Activated B cell treated with CpG ODN at 0.5 μM for 24 hours (primary cell): ENCODE measurements at regions of chr1 and their contacts with region 1.

Region 1: DNA sequence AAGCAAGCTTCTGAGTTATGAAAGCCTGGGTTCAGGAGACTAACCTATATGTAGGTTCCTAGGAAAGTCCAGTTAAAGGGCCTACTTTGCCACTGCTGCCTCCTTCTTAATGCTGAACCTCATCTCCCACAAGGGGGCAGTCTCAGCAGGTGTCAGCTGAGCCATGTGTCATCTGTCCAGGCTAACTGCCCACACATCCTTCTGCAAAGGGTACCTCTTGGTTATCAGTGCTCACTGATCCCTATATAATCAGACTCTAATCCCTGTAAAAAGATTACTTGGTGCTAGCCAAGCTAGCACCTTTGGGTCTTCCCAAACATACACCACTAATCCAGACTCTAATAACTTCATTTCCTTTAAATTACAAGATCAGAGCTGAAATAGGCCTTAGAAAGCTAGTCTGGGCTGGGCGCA is 9.0 kb downstream of the PRDX1 start:
- DNase-seq: no peak
- ATAC-seq: peak; percentile 80
- H3K4me3 Mint-ChIP-seq: no peak overlapping the region
- H3K27ac Mint-ChIP-seq: no peak overlapping the region
- H3K4me1 Mint-ChIP-seq: peaks cover 5% of the 10 kb centered on the region
- H3K27me3 Mint-ChIP-seq: no peaks in the 10 kb centered on the region
- CTCF ChIP-seq: peak; percentile 18

Region 2: DNA sequence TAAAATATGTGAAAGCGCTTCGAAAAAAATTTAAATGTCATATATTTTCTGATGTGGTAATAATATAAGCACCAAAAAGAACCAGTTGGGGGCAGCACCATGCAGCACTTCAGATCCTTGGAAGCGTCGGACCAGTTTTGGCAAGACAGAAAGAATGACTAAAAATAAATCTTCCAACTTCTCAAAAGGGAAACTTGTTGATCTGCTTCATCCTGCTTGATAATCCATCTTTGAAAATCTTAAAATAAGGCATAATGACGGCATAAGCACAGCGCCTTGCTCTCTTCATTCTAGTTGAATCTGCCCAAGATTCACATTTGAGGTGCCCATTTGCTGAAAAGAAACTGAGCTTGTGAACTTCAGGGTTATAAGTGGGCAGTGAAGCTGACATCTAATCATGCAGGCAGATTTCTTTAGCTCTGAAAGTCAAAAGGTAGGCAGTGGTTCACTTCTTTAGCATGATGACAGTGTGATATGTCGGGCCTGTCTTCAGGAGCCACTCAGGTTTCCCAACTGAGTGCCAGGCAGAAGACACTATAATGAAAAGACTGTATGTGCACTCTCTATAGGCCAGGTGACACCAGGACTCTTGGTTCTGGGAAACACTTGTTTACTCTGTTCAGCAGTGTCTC is 152.7 kb before region 1 on chr1:
- CTCF ChIA-PET with region 1: interaction called, 13 read pairs
- POLR2A ChIA-PET with region 1: no interaction called
- intact Hi-C with region 1: no loop called
- DNase-seq: no peak
- ATAC-seq: peak; percentile 73
- H3K4me3 Mint-ChIP-seq: peak overlapping the region; percentile 1
- H3K27ac Mint-ChIP-seq: peak overlapping the region; percentile 37
- H3K4me1 Mint-ChIP-seq: peaks cover 19% of the 10 kb centered on the region
- H3K27me3 Mint-ChIP-seq: no peaks in the 10 kb centered on the region
- CTCF ChIP-seq: no peak

Region 3: DNA sequence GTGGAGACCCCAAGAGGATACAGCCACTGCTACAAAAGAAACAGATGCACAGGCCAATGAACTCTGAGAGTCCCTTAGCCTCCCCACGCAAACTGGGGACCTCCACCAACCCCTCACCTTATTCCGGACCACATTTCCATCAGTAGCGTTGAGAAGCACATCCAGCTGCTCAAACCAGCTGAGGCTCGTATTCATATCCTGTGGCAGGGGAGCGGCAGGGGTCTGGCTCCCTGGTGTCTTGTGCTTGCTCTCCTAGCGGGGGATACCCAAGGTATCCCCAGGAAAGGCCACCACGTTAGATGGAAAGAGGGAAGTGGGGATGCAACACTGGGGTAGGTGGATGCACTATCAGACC is 13.3 kb before region 1 on chr1:
- CTCF ChIA-PET with region 1: interaction called, 13 read pairs
- POLR2A ChIA-PET with region 1: interaction called, 10 read pairs
- intact Hi-C with region 1: no loop called
- DNase-seq: no peak
- ATAC-seq: no peak
- H3K4me3 Mint-ChIP-seq: peak overlapping the region; percentile 97
- H3K27ac Mint-ChIP-seq: peak overlapping the region; percentile 88
- H3K4me1 Mint-ChIP-seq: peaks cover 27% of the 10 kb centered on the region
- H3K27me3 Mint-ChIP-seq: no peaks in the 10 kb centered on the region
- CTCF ChIP-seq: no peak

Region 4: DNA sequence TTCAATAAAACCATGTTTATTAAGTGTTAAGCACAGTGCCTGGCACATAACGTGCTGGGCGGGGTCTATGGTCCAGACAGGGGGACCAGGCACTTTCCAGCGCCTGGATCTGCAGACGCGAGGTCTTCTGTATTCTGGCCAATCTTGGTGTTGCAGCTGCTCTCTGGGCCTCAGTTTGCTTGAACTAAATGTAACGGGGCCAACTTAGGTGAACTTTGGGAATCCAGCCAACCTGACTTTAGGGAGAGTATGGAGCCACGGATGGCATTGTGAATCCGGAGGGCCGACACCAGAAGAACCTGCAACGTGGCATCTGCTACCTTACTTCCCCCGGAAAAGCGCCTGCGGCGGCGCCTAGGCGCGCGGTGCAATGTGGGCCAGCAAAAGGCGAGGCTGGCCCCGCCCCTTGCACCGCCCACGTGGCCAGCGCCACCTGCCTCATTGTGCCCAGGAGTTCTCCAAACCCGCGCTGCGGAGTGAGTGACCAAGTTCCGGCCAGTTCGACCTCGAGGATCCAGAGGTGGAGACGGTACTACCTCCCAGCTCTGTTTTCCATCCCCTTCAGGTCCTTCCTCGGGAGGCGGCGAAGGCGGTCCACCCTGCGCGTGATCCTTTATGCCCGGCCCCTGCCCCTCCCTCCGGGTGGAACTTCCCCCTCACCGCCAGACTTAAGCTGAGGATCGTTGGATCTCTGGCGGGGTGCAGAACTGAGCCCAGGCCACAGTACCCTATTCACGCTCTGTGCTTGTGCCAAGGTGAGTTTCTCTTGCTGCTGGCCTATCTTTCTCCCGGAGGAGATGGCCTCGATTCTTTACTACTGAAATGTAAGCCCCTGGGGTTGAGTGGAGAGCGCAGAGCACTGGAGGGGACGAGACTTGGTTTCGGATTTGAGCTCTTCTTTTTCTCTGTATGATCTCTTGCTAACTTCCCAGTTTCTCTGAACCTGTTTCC is 38.0 kb after region 1 on chr1 and contains the start of gene AKR1A1:
- CTCF ChIA-PET with region 1: interaction called, 7 read pairs
- POLR2A ChIA-PET with region 1: interaction called, 457 read pairs
- intact Hi-C with region 1: no loop called
- DNase-seq: peak; percentile 91
- ATAC-seq: peak; percentile 91
- H3K4me3 Mint-ChIP-seq: peak within 1 kb of the TSS; percentile 99
- H3K27ac Mint-ChIP-seq: peak within 1 kb of the TSS; percentile 95
- H3K4me1 Mint-ChIP-seq: peaks cover 35% of the 10 kb centered on the region
- H3K27me3 Mint-ChIP-seq: no peaks in the 10 kb centered on the region
- CTCF ChIP-seq: no peak
- total RNA-seq, gene AKR1A1: 215 and 218 TPM in 2 replicates

Region 5: GRCh38 chr1:45563843-45564242 is 51.2 kb after region 1 on chr1:
- CTCF ChIA-PET with region 1: interaction called, 186 read pairs
- POLR2A ChIA-PET with region 1: interaction called, 10 read pairs
- intact Hi-C with region 1: no loop called
- DNase-seq: no peak
- ATAC-seq: no peak
- H3K4me3 Mint-ChIP-seq: no peak overlapping the region
- H3K27ac Mint-ChIP-seq: no peak overlapping the region
- H3K4me1 Mint-ChIP-seq: peaks cover 6% of the 10 kb centered on the region
- H3K27me3 Mint-ChIP-seq: no peaks in the 10 kb centered on the region
- CTCF ChIP-seq: no peak

Region 6: GRCh38 chr1:45569962-45570581 is 57.4 kb after region 1 on chr1:
- CTCF ChIA-PET with region 1: interaction called, 186 read pairs
- POLR2A ChIA-PET with region 1: interaction called, 10 read pairs
- intact Hi-C with region 1: loop called (anchors 1 kb)
- DNase-seq: peak; percentile 48
- ATAC-seq: peak; percentile 98
- H3K4me3 Mint-ChIP-seq: no peak overlapping the region
- H3K27ac Mint-ChIP-seq: no peak overlapping the region
- H3K4me1 Mint-ChIP-seq: no peaks in the 10 kb centered on the region
- H3K27me3 Mint-ChIP-seq: no peaks in the 10 kb centered on the region
- CTCF ChIP-seq: peak; percentile 17